Activated naive CD4-positive, alpha-beta T cell treated with anti-CD3 and anti-CD28 coated beads for 36 hours (primary cell): ENCODE measurements at regions of chr6 and their contacts with region 1.

Region 1: DNA sequence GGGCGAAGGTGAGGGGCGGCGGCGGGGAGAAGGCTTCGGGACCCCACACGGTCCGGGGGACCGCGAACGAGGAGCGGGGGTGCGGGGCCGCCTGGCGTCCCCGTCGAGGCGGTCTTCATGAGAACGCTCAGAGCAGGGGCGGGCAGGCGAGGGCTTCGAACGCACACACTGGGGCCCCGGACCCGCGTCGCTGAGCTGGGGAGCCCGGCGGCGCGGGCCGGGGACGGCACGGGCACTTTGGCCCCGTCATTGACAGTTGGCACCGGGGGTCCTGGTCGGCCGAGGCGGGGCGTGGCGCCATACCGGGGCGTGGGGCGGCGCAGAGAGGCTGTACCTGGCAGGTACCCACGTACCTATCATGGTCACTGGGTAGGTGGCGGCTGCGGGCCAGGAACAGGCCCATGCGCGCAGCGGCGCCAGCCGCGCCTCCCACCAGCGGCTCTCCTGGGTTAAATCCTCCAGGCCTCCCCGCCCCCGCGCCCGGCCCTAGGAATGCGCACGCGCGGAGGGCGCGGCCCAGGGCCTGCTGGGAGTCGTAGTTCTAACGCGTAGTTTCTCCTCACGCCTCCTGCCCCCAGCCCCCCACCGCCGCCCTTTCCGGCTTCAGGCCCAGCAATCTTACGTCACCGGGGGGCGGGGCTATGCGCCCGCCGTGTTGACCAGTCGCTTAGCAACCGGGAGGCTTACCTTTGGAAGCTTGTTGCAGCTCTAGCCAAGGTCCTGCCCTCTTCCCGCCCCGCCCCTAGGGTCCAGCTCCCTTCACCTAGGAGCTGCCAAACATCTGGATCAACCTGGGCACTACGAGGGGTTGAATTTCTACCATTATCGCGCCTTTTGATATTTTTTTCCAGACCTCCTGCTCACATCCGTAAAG is at the starts of genes PACRG and PRKN:
- DNase-seq: peak; percentile 97
- H3K4me3 Mint-ChIP-seq: peak within 1 kb of the TSS; percentile 84
- H3K27ac Mint-ChIP-seq: peak within 1 kb of the TSS; percentile 80
- H3K4me1 Mint-ChIP-seq: peaks cover 7% of the 10 kb centered on the region
- H3K27me3 Mint-ChIP-seq: no peaks in the 10 kb centered on the region
- total RNA-seq, gene PACRG: not detected
- total RNA-seq, gene PRKN: 0.33 to 0.72 TPM

Region 2: DNA sequence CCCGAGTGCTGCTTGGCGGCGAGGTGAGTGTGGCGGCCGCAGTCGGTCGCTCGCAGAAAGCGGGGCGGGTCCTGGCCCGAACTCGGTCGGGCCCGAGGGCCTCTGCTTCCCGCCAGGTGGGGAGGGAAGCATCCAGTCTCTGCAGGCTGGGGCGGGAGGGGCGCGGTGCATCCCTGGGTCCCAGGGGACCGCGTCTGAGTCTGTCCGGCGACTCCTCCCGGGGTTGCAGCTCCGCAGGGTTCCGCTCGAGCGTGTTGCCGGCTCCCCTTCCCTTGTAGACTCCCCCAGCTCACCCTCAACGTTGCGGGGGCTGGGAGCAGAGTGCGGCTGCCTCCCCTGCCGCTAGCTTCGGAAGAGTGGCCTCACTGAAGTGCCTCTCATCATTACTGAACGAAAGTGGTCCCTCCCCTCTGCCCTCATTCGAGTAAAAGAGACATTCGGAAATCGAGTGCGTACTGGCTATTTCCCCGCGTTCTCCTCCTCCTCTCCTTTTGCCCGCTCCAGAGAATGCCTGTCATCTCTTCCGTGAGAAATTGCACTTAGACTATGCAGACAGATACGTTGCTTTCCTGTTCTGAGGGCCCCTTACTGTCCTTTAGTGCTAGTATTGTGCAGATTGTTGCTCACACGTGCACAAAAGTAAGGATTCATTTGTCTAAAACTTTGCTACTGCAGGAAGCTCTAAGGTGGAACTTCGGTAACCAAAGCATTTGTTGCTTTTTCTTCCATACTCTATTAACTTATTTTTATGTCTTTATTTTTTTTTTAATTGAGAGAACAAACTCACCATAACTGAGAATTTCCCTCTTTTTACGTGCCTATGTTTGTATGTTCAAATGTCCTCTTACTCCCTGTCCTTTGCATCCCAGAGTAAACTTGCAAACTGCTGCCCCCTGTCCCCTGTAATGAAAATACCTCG is 1735.2 kb before region 1 on chr6:
- CTCF ChIA-PET with region 1: no interaction called
- intact Hi-C with region 1: loop called (anchors 5 kb)
- DNase-seq: peak; percentile 51
- H3K4me3 Mint-ChIP-seq: peak overlapping the region; percentile 87
- H3K27ac Mint-ChIP-seq: peak overlapping the region; percentile 77
- H3K4me1 Mint-ChIP-seq: peaks cover 31% of the 10 kb centered on the region
- H3K27me3 Mint-ChIP-seq: peaks cover 2% of the 10 kb centered on the region

Region 3: DNA sequence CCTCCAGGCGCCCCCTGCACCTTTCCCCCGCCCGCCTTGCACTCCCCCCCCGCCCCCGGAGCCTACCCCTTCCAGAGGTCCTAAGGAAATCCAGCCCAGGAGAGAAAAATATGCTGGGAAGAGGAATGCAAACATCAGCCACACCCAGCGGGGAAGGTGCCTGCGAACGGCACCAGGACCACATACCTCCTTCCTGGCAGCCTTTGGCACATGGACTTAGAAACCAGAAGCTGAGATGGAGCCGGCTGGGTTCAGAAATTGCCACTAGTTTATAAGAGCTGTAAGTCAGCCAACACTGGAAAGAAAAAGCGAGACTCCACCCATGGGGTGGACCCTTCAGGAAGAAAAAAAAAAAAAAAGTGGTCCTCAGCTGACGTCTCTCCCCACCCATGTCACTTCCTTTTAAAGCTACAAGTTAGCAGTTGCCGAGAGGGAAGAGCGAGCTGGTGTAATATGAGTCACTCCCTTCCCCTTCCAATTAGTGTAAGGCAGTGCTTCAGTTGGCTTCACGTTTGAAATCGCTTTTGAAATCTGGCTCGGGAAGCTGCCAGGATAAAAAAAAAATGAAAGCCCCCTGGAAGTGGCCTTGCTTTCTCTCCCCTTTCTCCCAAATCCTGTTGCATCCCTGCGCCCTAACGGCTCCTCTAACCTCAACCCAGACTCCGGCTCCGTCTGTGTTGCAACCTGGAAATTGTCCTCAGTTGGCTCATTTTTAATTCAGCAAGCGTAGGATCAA is 1453.6 kb before region 1 on chr6 and contains the start of gene AGPAT4:
- CTCF ChIA-PET with region 1: no interaction called
- intact Hi-C with region 1: loop called (anchors 5 kb)
- DNase-seq: peak; percentile 71
- H3K4me3 Mint-ChIP-seq: peak within 1 kb of the TSS; percentile 73
- H3K27ac Mint-ChIP-seq: peak within 1 kb of the TSS; percentile 77
- H3K4me1 Mint-ChIP-seq: peaks cover 16% of the 10 kb centered on the region
- H3K27me3 Mint-ChIP-seq: peaks cover 3% of the 10 kb centered on the region
- total RNA-seq, gene AGPAT4: 3.7 to 4.2 TPM

Region 4: DNA sequence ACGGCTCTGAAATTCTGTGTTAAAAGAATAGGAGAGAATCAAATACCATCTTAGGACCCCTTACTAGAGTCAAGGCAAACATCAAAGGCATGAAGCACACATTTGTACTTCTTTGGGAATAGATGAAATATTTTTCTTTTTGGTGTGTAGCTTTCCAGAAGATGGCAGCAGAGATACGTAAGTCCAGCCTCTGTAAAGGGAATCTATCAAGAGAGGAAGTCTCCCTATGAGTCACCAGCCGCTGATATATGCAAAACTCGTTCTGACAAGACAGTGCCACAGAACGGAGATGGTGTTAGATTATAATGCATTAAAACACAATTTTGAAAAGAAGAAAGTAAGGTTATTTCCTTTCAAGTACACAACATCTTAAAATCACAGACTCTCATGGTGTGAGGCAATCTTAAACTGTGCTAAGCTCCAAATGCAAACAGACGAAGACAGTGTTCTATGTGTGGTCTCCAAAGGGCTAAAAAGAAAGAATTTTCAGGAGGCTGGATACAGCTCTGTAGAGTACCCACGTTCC is 1333.6 kb before region 1 on chr6:
- CTCF ChIA-PET with region 1: no interaction called
- intact Hi-C with region 1: loop called (anchors 5 kb)
- DNase-seq: peak; percentile 81
- H3K4me3 Mint-ChIP-seq: no peak overlapping the region
- H3K27ac Mint-ChIP-seq: no peak overlapping the region
- H3K4me1 Mint-ChIP-seq: no peaks in the 10 kb centered on the region
- H3K27me3 Mint-ChIP-seq: no peaks in the 10 kb centered on the region

Region 5: GRCh38 chr6:163170294-163170883 is 442.8 kb after region 1 on chr6:
- CTCF ChIA-PET with region 1: no interaction called
- intact Hi-C with region 1: loop called (anchors 10 kb)
- DNase-seq: peak; percentile 33
- H3K4me3 Mint-ChIP-seq: no peak overlapping the region
- H3K27ac Mint-ChIP-seq: no peak overlapping the region
- H3K4me1 Mint-ChIP-seq: no peaks in the 10 kb centered on the region
- H3K27me3 Mint-ChIP-seq: peaks cover 7% of the 10 kb centered on the region

Region 6: DNA sequence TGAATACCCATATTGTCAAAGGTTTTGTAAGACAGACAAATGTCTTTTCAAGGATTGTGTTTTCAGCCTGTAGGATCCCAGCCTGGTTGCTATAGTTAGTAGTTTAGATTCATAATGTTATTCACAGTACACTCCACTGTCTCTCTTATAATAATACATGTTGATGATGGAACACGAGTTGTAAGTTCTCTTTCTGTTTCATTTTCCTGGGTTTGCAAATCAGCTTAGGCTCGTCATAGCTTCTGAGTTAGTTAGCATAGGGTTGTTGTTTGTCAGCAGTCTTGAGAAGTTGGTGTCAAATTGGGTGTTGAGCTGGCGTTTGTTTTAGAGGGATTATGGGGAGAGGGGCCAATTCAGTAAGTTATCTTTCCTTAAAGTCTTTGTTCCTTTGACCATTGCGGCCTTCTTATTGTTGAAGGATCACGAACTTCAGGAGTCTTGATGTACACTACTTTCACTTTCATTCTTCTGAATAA is 732.8 kb after region 1 on chr6:
- CTCF ChIA-PET with region 1: no interaction called
- intact Hi-C with region 1: loop called (anchors 1 kb)
- DNase-seq: peak; percentile 25
- H3K4me3 Mint-ChIP-seq: peak overlapping the region; percentile 90
- H3K27ac Mint-ChIP-seq: peak overlapping the region; percentile 97
- H3K4me1 Mint-ChIP-seq: peaks cover 61% of the 10 kb centered on the region
- H3K27me3 Mint-ChIP-seq: no peaks in the 10 kb centered on the region